ENCODE measurements at regions of chr3 and their contacts with region 1.

Region 1: DNA sequence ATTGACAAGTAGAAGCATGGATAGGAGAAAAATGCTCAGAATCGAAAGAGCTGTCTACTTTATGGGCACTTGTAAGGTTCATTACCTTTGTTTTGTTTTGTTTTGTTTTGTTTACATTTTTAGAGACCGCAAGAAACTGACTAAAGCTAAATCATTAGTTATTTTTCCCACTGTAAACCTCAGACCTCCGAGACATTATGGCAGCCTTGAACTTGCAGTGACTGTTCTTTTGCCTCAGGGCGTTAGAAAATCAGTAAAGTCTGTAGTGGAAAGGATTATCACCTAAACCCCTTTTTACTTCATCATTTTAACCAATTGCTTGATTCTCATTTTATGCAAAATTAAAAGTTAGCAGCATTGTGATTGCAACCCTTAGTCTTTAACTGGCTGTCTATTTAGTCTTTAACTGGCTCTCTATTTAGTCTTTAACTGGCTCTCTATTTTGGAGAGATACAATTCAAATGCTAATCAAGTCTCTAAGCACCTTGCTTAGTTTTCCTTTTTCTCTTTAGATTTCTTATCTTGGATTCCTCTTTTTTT is 383.3 kb upstream of the ROBO2 start:
- DNase-seq: no peak
- H3K4me3 ChIP-seq: no peak overlapping the region
- H3K27ac ChIP-seq: no peak overlapping the region
- H3K4me1 ChIP-seq: no peaks in the 10 kb centered on the region
- H3K27me3 ChIP-seq: no peaks in the 10 kb centered on the region
- CTCF ChIP-seq: no peak
- POLR2A ChIP-seq: no peak

Region 2: DNA sequence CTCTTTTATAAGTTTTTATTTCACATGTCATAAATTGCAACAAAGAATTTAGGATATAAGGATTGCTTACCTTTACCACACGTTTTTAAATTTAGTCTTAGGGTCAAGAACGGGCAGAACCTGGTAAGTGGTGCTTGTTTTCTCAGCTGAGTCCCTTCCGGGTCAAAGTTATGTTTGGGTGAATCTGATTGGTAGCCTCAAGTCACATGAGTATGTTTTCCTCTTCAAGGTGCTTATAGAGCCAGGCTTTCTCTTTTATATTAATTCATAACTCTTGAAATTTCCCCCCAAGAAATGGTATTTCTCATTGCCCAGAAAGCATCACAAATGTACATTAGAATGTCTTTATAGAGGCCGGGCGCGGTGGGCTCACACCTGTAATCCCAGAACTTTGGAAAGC is 32.4 kb before region 1 on chr3:
- intact Hi-C with region 1: no loop called
- DNase-seq: no peak
- H3K4me3 ChIP-seq: no peak overlapping the region
- H3K27ac ChIP-seq: no peak overlapping the region
- H3K4me1 ChIP-seq: no peaks in the 10 kb centered on the region
- H3K27me3 ChIP-seq: no peaks in the 10 kb centered on the region
- CTCF ChIP-seq: no peak
- POLR2A ChIP-seq: no peak

Region 3: GRCh38 chr3:76841747-76842146 is 185.1 kb after region 1 on chr3:
- intact Hi-C with region 1: loop called (anchors 5 kb)
- DNase-seq: no peak
- H3K4me3 ChIP-seq: no peak overlapping the region
- H3K27ac ChIP-seq: no peak overlapping the region
- H3K4me1 ChIP-seq: no peaks in the 10 kb centered on the region
- H3K27me3 ChIP-seq: no peaks in the 10 kb centered on the region
- CTCF ChIP-seq: no peak
- POLR2A ChIP-seq: no peak